ENCODE measurements at regions of chr15 and their contacts with region 1.

Region 1: GRCh38 chr15:33963831-33964664 is 4.2 kb upstream of the CHRM5 start:
- DNase-seq: peak; percentile 60
- H3K4me3 ChIP-seq: no peak overlapping the region
- H3K27ac ChIP-seq: no peak overlapping the region
- H3K4me1 ChIP-seq: peaks cover 10% of the 10 kb centered on the region
- H3K27me3 ChIP-seq: no peaks in the 10 kb centered on the region

Region 2: DNA sequence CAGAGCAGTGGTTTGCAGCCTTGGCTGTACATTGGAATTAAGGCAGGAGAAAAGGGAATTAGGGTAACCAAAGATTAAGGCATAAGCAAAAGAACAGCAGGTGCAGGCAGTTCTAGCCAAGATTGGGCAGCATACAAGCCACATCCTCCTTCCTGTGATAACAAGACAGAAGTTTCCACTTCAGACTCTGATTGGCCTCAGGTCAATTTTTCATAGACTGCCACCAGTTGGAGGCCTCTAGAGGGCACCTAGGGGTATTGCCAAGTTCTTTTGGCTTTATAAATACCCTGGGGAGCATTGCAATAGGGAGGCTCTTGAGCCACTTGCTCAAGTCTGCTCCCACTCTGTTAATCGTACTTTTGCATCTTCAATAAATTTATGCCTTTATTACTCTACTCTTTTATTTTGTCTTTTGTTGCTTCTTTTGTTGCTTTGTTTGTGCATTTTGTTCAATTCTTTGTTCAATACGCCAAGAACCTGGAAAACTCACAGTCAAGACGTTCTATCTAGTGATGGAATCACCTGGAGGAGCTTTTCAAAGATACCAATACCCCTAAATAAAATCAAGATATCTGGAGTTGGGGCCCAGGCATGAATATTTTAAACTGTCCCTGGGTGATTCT is 737.4 kb before region 1 on chr15:
- in situ Hi-C with region 1: loop called (anchors 25 kb)
- DNase-seq: peak; percentile 46
- H3K4me3 ChIP-seq: no peak overlapping the region
- H3K27ac ChIP-seq: no peak overlapping the region
- H3K4me1 ChIP-seq: no peaks in the 10 kb centered on the region
- H3K27me3 ChIP-seq: peaks cover 17% of the 10 kb centered on the region

Region 3: GRCh38 chr15:33766389-33766788 is 197.7 kb before region 1 on chr15:
- in situ Hi-C with region 1: loop called (anchors 25 kb)
- DNase-seq: peak; percentile 20
- H3K4me3 ChIP-seq: no peak overlapping the region
- H3K27ac ChIP-seq: no peak overlapping the region
- H3K4me1 ChIP-seq: no peaks in the 10 kb centered on the region
- H3K27me3 ChIP-seq: peaks cover 19% of the 10 kb centered on the region

Measured in GM23248 (cell line).